Right ventricle myocardium inferior (tissue), 1 donor: ENCODE measurements at regions of chr21 and their contacts with region 1.

Region 1: DNA sequence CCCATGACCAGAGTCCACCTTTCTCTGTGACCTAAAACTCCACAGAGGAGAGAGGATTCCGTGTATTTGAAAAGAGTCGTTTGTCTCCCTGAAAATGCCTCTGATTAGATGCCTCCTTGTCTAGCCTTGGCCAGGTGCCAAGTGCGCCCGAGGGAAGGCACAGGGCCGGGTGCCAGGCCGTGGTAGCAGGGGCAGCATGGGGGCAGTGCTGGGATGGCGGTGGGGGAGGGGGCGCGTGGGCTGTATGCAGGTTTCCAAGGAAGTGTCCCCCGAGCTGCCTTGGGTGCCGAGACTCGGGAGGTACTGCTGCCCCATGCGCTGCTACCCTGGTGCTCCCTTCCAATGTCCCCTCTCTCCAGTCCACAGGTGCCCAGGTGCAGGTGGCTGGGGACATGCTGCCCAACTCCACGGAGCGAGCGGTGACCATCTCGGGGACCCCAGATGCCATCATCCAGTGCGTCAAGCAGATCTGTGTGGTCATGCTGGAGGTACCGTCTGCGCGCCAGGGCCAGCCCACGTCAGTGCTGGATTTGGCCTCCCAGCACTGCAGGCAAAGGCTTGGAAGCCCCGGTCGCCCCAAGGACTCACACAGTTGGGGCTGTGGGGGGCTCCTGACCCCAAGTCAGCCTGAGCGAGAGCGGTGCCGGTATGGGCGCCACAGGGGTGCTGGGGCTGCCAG is 70.9 kb upstream of the COL6A1 start:
- DNase-seq: no peak
- ATAC-seq: no peak

Region 2: DNA sequence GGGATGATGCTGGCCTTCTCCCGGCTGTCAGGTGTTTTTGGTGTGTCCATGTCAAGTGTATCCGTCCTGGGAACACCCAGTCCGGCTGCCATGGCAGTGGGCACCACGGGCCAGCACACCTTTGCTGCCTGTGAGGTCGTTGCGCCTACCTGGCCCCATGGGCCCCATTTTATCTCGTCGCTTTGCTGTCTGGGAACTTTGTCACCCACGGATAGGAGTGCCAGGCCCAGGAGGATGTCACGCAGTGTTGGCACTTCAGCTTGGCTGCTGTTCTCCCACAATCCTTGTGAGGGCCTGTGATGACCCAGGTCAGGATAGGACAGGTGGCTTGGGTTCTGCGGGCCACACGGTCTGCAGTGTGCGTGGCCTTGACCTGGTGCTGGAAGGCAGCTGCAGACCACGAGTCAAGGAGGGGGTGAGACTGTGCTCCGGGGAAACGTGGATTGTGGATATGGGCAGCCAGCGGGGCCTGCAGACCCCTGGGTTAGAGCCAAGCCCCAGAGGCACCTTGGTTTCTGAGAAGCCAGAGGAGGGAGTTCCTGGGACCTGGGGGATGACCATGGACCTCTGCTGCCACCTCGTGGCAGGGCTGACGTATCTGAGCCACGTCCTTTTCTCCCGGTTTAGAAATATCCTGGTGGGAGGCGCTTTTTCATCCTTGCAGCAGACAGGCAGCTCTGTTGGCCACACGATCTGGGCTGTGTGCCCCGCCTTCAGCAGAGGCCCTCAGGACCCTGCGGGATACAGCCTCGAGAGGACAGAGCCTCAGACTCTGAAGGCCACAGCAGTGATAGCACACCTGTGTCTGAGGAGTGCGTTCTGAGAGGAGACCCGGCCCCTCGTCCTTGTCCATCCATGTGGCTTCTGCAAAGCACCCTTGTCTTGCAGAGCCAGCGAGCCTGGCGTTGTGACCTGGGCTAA is 90.3 kb before region 1 on chr21:
- intact Hi-C with region 1: loop called (anchors 10 kb)
- DNase-seq: peak; percentile 86
- ATAC-seq: peak; percentile 78

Region 3: GRCh38 chr21:45973659-45974072 is 63.0 kb after region 1 on chr21:
- intact Hi-C with region 1: no loop called
- DNase-seq: peak; percentile 92
- ATAC-seq: peak; percentile 49